Cardiac septum (tissue), 1 donor: ENCODE measurements at regions of chr1 and their contacts with region 1.

Region 1: GRCh38 chr1:207828485-207829158 is 76.8 kb downstream of the CD46 start:
- DNase-seq: peak; percentile 87

Region 2: GRCh38 chr1:207848234-207848633 is 19.6 kb after region 1 on chr1:
- intact Hi-C with region 1: loop called (anchors 2 kb)
- DNase-seq: peak; percentile 89

Region 3: DNA sequence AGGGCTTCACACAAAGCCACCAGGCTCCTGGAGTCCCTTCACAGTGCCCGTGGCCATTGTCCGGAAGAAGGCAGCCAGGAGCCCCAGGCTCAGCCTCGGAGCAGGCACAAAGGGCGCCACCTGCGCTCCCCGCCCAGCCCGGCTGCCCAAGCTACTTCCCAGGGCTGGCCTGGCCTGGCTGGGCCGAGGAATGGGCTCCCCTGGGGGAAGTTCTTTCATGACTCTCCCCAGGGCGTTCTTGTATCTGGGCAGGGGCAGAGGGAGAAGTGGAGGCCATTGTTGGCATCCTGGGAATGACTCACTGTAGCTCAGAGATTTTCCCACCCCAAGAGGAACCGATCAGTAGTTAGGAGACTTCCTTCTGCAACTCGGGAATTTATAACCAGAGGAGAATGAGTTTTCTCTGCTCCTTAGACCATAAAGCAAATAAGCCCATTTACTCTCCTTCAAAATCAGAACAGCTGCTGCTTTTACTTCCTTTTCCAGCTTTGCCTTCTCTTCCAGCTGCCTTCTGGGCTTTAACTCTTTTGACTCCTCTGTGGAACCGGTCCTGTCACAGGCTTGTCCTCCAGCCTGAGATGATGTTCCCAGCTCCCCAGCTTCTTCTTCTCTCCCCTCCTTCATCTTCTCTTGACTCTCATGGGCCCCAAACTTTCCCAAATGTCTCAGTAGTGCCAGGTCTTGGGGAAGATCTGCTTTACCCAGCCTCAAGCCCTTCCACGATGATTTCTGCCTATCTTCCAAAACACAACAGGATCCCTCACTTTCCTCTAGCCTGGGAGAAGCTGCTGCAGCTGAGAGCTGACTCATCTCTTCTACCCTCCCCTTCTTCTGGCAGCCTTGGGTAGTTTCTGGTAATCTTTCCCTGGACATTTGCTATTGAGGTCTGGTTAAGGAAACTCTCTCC is 201.0 kb after region 1 on chr1:
- intact Hi-C with region 1: no loop called
- DNase-seq: peak; percentile 63